BJ (cell line): ENCODE measurements at regions of chr1 and their contacts with region 1.

Region 1: DNA sequence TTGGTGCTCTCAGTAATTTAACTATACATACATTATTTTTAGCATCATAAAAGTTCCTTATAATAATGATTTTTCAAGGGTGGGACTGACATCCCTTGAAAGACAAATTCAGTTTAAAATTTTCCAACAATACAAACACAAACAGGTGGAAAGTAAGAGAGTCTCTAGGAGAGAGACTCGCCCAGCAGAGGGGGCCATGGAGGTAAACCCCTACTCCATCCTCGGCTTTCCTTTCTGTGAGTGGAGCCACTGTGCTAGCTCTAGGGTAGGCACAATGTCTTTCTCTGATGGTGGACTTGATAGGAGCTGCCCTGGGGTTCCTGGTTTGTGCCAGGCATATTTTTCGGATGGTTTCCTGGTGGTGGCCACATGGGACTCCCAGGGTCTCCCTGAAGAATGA is 8.3 kb downstream of the CSMD2 start:
- DNase-seq: no peak
- H3K4me3 ChIP-seq: no peak overlapping the region
- H3K27me3 ChIP-seq: no peaks in the 10 kb centered on the region
- CTCF ChIP-seq: no peak

Region 2: DNA sequence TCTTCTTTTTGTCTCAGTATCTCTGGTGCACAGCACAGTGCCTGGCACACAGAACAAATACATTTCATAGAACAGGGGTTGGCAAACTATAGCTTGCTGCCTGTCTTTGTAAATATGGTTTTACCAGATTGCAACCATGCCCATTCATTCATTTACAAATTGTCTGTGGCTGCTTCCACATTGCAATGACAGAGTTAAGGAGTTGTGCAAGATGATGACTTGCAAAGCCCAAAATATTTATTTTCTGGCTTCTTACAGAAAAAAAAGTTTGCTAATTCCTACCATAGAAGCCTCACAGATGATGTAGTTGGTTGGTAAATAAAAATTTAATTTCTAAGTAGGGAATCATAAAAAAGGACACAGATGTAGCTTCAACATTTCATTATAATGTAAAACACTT is 304.0 kb before region 1 on chr1:
- CTCF ChIA-PET with region 1: no interaction called
- POLR2A ChIA-PET with region 1: interaction called, 22 read pairs
- DNase-seq: no peak
- H3K4me3 ChIP-seq: no peak overlapping the region
- H3K27me3 ChIP-seq: peaks cover 2% of the 10 kb centered on the region; the same call in 1 of the 2 replicates
- CTCF ChIP-seq: no peak

Region 3: DNA sequence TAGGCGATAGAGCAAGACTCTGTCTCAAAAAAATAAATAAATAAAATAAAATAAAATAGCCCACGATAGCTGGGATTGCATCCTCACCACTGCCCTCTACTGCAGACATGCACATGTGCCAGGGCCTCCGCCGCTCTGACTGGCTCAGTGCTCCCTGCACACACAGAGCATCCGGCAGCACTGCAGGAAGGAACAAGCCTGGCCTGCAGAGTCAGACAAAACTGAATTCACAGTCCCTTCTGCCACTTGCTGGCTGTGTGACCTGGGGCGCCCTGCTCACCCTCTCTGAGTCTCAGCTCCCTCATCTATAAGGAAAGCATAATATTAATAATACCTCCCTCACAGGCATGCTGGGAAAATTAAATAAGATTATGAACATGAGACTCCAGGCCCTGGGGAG is 27.1 kb before region 1 on chr1:
- CTCF ChIA-PET with region 1: no interaction called
- POLR2A ChIA-PET with region 1: no interaction called
- DNase-seq: no peak
- H3K4me3 ChIP-seq: no peak overlapping the region
- H3K27me3 ChIP-seq: no peaks in the 10 kb centered on the region
- CTCF ChIP-seq: no peak

Region 4: DNA sequence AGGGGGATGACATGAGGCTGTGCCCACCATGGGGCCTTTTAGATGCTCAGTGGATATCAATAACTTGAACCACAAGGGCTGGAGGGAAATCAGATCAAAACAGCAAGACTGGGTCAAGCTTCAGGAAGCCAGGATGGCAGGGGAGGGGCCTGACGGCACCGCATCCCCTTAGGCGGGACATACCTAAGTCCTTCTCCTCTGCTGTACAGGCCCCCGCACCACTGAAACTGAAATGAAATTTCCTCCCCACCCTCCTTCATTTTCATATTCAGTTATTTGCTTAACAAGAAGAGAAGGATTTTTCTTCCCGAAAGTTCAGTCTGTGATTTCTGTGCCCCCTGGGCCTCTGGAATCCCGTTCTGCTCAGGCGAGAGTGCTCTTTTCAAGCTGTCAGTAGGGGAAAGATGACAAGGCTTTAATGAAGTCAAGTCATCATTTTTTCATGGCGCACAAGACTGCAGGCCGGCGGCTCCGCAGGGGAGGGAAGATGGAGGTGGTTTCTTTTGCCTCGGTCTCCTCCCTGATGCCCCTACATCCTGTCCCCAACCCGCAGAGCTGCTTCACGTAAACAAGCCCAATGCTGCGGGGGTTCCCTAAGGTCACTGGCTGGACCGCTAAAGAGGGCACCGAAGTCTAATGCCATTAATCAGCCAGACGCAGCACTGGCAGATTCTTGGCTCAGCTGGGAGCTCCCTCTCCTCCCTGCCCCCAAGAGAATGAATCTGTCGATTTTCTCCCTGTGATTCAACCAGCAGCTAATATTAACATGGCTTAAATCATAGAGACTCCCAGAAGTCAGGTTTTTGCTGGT is 284.7 kb after region 1 on chr1:
- CTCF ChIA-PET with region 1: no interaction called
- POLR2A ChIA-PET with region 1: no interaction called
- DNase-seq: no peak
- H3K4me3 ChIP-seq: no peak overlapping the region
- H3K27me3 ChIP-seq: no peaks in the 10 kb centered on the region
- CTCF ChIP-seq: no peak